Activated T-helper 2 cell treated with anti-CD3 and anti-CD28 coated beads, Interferon-gamma antibody, Interleukin-2, Interleukin-4, amounts not matched to agents 10 μg/mL and 5 μg/mL and 100 μg/mL, durations not matched to agents 14 hours and 24 hours and 36 hours (primary cell): ENCODE measurements at regions of chr3 and their contacts with region 1.

Region 1: GRCh38 chr3:190617185-190617584 is 103.3 kb downstream of the IL1RAP start:
- DNase-seq: peak; percentile 50
- H3K4me3 Mint-ChIP-seq: peak overlapping the region; percentile 40
- H3K27ac Mint-ChIP-seq: peak overlapping the region; percentile 97
- H3K4me1 Mint-ChIP-seq: peaks cover 77% of the 10 kb centered on the region
- H3K27me3 Mint-ChIP-seq: no peaks in the 10 kb centered on the region

Region 2: DNA sequence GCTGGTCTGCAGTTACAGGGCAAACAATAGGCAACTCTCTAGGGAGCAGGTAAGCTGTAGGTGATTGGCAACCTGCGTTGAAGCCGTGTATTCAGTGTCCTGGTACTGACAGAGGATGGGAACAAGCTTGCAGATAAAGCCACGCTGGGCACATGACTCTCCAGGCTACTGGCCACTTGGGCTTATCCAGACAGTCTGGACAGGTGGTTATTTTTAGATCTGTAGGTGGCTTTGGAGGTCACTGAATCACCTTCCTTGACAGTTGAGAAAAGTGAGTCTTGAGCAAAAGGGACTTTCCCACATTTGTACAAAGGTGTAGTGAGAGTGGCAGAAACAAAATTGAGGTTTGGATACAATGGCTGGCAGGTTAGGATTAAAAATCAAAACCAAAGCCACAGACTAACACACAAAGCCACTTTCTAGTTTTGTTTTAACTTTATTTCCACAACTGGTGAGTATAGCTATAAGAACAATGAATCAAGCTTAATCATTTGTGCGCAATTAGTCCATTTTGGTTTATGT is 125.6 kb before region 1 on chr3:
- intact Hi-C with region 1: loop called (anchors 1 kb)
- DNase-seq: no peak
- H3K4me3 Mint-ChIP-seq: no peak overlapping the region
- H3K27ac Mint-ChIP-seq: no peak overlapping the region
- H3K4me1 Mint-ChIP-seq: peaks cover 35% of the 10 kb centered on the region
- H3K27me3 Mint-ChIP-seq: peaks cover 73% of the 10 kb centered on the region

Region 3: DNA sequence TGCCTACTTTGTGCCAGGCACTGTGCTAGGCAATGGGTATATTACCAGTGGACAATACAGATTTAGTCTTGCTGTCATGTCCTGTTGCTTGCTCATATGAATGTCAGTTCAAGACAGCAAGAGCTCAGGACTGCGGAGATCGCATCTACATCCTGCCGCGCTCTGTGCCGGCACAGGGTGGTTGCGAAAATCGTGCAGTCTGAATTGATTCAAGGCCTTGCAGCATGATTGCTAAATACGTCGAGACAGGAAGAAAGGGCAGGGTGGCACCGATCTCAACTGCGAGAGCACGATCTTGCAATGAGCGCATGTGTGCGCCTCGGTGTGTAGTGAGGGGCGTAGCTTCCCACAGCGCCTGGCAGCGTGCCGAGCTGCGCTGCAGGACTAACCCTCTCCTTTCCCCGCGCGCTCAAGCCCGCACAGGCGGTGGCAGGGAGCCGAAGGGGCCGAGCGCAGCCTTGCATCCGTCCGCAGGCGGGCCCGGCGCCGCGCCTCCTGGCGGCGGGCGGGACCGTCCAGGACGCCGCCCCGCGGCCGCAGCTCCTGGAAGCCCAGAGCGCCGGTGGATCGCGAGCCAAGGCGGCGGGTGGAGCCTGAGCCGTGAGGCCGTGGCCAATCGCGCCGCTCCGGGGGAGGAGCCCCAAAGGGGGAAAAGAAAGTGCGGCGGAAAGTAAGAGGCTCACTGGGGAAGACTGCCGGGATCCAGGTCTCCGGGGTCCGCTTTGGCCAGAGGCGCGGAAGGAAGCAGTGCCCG is 103.6 kb before region 1 on chr3 and contains the start of gene IL1RAP:
- intact Hi-C with region 1: loop called (anchors 1 kb)
- DNase-seq: peak; percentile 89
- H3K4me3 Mint-ChIP-seq: peak within 1 kb of the TSS; percentile 90
- H3K27ac Mint-ChIP-seq: peak within 1 kb of the TSS; percentile 97
- H3K4me1 Mint-ChIP-seq: peaks cover 39% of the 10 kb centered on the region
- H3K27me3 Mint-ChIP-seq: no peaks in the 10 kb centered on the region
- total RNA-seq, gene IL1RAP: 34.5 and 38.6 TPM in 2 replicates

Region 4: DNA sequence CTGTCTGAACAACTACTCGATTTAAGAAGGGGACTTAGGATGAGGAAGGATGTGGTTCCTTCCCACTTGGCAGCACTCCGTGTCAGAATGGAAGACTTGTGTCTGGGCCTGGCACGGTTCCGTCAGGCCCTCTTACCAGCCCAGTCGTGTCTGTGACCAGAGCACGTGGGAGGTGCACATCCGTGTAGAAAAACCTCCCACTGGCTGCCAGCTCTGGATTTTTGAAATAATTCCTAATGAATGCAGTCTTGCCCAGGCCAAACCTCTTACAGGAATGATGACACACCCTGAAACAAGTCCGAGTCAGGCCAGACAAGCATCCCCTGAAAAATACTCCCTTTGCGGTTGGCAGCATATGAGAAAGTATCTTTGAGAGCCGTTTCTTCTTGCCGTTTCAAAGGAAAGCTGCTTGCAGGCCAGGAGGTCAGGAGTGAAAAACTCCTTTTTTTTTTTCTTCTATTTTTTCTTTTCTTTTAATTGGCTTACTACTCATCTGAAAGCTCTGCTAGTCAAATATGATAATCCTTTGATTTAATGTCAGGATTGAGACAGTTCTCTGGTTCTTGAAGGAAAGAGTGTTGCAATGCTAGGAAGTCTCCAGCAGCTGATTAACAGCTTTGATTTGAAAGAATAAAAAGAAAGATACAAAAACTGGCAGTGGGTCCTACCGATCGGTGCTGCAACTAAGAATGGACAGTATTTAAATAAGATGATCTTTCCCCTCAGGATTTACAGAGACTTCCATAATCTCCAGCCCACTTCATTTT is 83.5 kb before region 1 on chr3:
- intact Hi-C with region 1: loop called (anchors 1 kb)
- DNase-seq: no peak
- H3K4me3 Mint-ChIP-seq: no peak overlapping the region
- H3K27ac Mint-ChIP-seq: peak overlapping the region; percentile 42
- H3K4me1 Mint-ChIP-seq: peaks cover 55% of the 10 kb centered on the region
- H3K27me3 Mint-ChIP-seq: no peaks in the 10 kb centered on the region

Region 5: DNA sequence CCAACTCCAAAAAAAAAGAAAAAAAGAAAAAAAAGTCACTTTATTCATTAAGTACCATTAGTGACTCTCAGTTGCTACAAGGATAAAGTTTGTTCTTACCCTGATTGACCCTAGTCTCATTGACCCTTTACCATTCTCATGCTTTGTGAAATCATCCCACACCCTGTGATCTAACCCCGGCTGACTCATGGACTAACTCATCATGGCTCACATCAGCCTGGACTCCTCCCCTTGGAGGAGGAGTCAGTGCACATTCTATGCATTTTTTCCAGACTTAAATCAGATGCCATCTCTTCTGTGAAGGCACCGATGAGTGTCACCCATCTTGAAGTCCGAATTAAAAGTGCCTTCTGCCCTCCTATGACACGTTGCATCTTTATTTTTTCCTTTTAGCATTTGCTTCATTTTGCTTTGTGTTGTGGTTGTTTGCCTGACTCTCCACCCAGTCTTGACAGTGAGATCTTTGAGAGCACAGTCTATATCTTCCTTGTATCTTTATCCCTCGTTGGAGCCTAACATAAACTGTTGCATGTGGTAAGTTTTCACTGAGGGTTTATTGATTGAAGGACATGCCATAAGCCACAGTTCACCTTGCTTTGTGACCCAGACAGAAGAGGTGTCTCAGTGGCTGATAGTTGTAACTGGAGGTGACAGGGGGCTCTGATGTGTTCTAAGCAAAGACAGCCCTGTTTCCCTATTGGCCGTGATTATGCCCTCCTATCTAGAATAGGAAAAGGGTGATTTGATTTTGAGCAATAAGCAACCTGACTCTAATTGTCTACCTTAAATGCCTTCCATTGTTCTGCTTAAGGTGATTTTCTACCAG is 31.2 kb before region 1 on chr3:
- intact Hi-C with region 1: loop called (anchors 1 kb)
- DNase-seq: peak; percentile 59
- H3K4me3 Mint-ChIP-seq: peak overlapping the region; percentile 73
- H3K27ac Mint-ChIP-seq: peak overlapping the region; percentile 95
- H3K4me1 Mint-ChIP-seq: peaks cover 78% of the 10 kb centered on the region
- H3K27me3 Mint-ChIP-seq: no peaks in the 10 kb centered on the region

Region 6: DNA sequence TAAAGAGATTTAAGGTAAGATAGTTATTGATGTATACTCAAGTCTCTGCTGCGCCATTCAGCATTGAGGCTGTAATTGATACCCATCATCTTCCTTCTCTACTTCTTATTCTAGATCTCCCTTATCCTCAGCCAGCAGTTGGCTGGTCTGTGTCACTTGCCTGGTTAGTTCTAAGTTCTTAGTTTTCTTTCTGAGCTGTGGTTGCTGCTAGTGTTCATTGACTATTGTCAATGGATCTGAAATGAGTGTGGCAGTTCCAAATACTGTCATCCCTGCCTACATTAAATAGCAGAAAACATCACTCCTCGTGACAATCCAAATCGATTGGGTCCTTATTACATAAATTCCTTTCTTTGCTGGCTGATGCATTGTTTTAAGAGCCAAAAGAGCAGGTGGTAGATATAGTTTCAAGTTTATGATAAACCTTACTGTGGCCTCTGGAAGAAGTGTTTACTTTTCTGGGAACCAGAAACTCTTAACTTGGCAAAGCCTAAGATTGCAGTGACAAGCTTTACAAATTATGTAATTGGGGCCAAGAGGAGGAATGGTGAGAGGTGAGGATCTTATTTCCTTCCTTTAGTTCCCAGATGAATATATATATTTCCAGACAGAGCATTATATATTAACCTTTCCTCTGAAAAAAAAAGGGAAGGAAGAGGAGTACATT is 77.3 kb after region 1 on chr3:
- intact Hi-C with region 1: loop called (anchors 2 kb)
- DNase-seq: no peak
- H3K4me3 Mint-ChIP-seq: no peak overlapping the region
- H3K27ac Mint-ChIP-seq: no peak overlapping the region
- H3K4me1 Mint-ChIP-seq: peaks cover 22% of the 10 kb centered on the region
- H3K27me3 Mint-ChIP-seq: peaks cover 8% of the 10 kb centered on the region

Region 7: GRCh38 chr3:190972840-190973270 is 355.7 kb after region 1 on chr3:
- intact Hi-C with region 1: no loop called
- DNase-seq: no peak
- H3K4me3 Mint-ChIP-seq: no peak overlapping the region
- H3K27ac Mint-ChIP-seq: no peak overlapping the region
- H3K4me1 Mint-ChIP-seq: no peaks in the 10 kb centered on the region
- H3K27me3 Mint-ChIP-seq: no peaks in the 10 kb centered on the region